Activated CD4-positive, alpha-beta T cell treated with anti-CD3 and anti-CD28 coated beads, Interleukin-2, amount 10 ng/mL, durations not matched to agents 24 days and 14 days (primary cell): ENCODE measurements at regions of chr15 and their contacts with region 1.

Region 1: DNA sequence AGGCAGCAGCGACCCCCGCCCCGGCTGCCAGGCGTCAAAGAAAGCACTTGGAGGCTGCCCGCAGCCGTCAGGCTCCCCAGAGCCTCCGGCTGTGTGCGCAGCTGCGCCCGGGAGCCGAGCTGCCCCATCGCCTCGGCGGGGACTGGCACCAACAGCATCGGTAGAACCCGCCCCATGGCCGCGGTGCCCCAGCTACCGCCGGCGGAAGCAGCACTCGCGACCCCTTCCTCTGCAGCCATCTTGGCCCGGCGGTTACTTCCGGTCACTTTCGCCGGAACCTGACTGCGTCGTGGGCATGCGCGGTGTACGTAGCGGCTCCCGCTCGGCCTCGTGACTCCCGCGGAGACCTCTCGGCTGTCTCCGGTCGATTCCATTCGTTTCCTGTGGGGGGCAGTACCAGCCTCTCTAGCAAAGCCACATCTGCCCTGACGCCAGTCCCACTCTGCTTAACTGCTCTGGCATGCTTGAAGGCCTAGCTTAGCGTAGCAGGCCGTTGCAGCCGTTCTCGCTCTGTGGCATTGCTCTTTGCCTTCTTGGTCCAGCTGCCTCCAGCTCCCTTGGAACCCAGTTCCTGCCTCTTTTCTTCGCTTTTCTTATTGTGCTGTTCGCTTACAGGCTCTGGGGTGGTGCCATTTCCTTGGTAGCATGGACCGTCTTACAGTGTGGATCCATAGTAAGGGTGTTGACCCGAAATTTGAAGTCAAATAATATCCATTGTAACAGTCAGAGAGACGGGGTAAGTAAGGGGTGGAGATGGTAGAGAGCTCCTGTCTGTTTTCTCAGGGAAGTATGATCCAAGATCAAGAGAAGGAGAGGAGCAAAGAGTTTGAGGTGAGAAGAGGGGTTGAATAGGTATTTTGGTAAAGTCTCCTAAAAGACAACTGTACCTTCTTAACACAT is at the start of gene SPG11:
- DNase-seq: peak; percentile 99
- H3K4me3 Mint-ChIP-seq: peak within 1 kb of the TSS; percentile 86
- H3K27ac Mint-ChIP-seq: peak within 1 kb of the TSS; percentile 98
- H3K4me1 Mint-ChIP-seq: peaks cover 57% of the 10 kb centered on the region
- H3K27me3 Mint-ChIP-seq: no peaks in the 10 kb centered on the region
- total RNA-seq, gene SPG11: 67.2 and 68.0 TPM in 2 replicates

Region 2: DNA sequence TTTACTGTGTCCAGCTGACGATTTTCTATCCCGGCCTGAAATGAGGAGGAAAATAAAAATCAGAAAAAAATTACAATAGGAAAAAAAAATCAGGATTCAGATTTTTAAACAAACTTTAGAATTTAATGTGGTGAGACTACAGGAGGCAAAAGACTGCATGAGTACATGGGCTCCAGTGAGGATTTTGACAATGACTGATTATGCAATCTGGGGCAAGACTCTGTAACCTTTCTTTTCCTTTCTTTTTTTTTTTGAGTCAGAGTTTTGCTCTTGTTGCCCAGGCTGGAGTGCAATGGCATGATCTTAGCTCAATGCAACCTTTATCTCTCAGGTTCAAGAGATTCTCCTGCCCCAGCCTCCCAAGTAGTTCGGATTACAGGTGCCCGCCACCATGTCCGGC is 30.1 kb before region 1 on chr15:
- intact Hi-C with region 1: loop called (anchors 1 kb)
- DNase-seq: no peak
- H3K4me3 Mint-ChIP-seq: peak overlapping the region; percentile 71
- H3K27ac Mint-ChIP-seq: peak overlapping the region; percentile 91
- H3K4me1 Mint-ChIP-seq: peaks cover 22% of the 10 kb centered on the region
- H3K27me3 Mint-ChIP-seq: no peaks in the 10 kb centered on the region

Region 3: DNA sequence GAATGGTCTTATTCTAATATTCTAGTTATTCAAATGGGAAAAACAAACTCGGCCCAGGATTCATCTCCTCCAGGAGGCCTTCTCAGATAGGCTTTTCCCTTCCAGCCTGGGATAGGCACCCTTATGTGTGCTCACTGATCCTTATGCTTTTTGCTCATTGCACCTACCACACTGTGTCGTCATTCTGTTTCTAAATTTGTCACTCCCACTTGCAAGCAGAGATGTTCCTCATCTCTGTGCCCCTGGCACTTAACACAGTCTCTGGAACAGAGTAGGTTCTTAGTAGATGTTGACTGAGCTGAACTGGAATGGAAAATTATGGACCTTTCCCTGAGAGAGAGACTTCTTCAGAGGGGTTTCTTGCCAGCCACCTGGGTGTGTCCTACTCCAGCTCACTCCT is 18.6 kb after region 1 on chr15:
- intact Hi-C with region 1: loop called (anchors 1 kb)
- DNase-seq: no peak
- H3K4me3 Mint-ChIP-seq: peak overlapping the region; percentile 73
- H3K27ac Mint-ChIP-seq: peak overlapping the region; percentile 91
- H3K4me1 Mint-ChIP-seq: peaks cover 64% of the 10 kb centered on the region
- H3K27me3 Mint-ChIP-seq: no peaks in the 10 kb centered on the region

Region 4: DNA sequence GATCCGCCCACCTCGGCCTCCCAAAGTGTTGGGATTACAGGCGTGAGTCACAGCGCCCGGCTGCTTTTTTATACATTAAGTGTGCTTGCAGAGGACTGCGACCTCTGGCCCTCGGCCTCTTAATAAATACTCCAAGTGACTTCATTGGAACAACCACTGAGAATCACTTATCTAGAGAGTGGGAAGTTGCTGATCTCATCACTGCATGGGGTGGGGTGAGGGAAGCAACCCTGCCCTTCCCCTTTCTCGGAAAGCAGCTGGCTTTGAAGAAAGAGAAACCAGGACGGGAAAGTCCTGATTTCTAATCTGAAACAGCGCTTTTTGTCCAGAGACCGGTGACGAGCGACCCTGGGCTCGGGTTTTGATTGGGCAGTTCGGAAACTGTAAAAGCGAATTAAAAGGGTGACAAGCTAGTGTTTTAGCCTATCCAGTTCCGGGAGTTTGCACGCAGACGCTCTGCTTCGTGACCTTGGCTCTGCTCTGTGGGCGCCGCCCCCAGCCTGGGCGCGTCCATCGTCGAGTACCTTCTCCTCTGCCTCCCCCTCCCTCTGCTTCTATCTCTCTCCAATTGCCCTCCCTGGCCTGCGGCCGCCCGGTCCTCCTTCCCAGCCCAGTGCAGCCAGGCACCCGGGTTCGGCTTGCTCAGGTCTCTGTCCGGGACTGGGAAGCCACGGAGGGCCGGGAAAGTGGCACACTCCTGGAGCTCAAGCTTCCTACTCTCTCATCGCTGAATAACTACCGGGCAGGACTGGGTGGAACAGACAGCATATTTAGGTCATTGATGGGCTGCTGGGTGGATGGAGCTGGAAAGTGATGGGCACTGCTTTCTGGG is 65.1 kb after region 1 on chr15:
- intact Hi-C with region 1: loop called (anchors 1 kb)
- DNase-seq: peak; percentile 99
- H3K4me3 Mint-ChIP-seq: peak overlapping the region; percentile 99
- H3K27ac Mint-ChIP-seq: peak overlapping the region; percentile 100
- H3K4me1 Mint-ChIP-seq: peaks cover 64% of the 10 kb centered on the region
- H3K27me3 Mint-ChIP-seq: peaks cover 2% of the 10 kb centered on the region